ENCODE measurements at regions of chr20 and their contacts with region 1.

Region 1: DNA sequence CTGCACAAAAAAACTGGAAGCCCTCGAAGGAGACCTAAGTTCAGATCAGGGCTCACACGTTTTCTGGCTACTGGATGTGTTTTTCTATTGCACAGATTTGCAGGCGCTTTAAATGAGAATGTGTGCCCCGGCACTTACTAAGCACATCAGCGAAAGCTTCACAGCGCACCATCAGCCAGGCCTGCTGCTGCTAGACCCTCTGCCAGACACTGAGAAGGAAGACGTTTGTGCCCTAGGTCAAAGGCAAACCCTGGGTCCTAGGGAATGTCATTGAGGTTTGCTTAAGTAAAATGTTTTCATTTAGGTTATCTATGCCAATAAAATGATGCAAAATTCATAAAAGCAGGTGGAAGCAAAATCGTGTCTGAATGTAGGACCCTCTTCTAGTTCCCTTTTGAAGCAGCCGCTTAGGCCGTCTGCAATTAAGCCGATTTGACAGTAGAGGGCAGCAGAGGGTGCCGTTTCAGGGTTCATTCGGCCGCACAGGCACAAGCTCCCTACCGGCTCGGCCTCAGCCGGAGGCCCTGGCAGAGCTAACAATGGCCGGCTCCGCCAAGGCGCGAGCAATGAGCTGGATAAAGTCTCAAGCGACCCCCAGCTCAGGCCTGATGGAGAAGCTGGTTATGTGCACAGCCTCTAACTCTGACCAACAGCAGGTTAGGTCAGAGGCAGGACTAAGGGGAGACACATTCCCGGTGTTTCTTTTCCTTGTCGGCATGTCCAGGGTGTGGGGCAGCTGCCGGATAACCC is 107.2 kb upstream of the FOXA2 start:
- DNase-seq: peak; percentile 70 to 83 (median 81)
- H3K4me3 ChIP-seq: peak overlapping the region; percentile 7
- H3K27ac ChIP-seq: no peak overlapping the region
- H3K4me1 ChIP-seq: peaks cover 5% of the 10 kb centered on the region
- H3K27me3 ChIP-seq: no peaks in the 10 kb centered on the region
- CTCF ChIP-seq: peak; percentile 84 to 87 (median 85)
- EP300 ChIP-seq: no peak
- POLR2A ChIP-seq: no peak

Region 2: GRCh38 chr20:23235173-23236027 is 543.9 kb after region 1 on chr20:
- intact Hi-C with region 1: loop called (anchors 5 to 10 kb)
- DNase-seq: peak; percentile 76 to 83 (median 79)
- H3K4me3 ChIP-seq: no peak overlapping the region
- H3K27ac ChIP-seq: no peak overlapping the region
- H3K4me1 ChIP-seq: peaks cover 8% of the 10 kb centered on the region
- H3K27me3 ChIP-seq: no peaks in the 10 kb centered on the region
- CTCF ChIP-seq: peak; percentile 60 to 80 (median 71)
- EP300 ChIP-seq: no peak
- POLR2A ChIP-seq: no peak

Region 3: GRCh38 chr20:23245553-23246181 is 554.1 kb after region 1 on chr20:
- intact Hi-C with region 1: loop called in 1 of 4 experiments (anchors 10 kb)
- DNase-seq: peak in 2 of 5 donors; percentile 34 to 36
- H3K4me3 ChIP-seq: no peak overlapping the region
- H3K27ac ChIP-seq: no peak overlapping the region
- H3K4me1 ChIP-seq: peaks cover 2% of the 10 kb centered on the region
- H3K27me3 ChIP-seq: no peaks in the 10 kb centered on the region
- CTCF ChIP-seq: no peak
- EP300 ChIP-seq: no peak
- POLR2A ChIP-seq: no peak

Region 4: DNA sequence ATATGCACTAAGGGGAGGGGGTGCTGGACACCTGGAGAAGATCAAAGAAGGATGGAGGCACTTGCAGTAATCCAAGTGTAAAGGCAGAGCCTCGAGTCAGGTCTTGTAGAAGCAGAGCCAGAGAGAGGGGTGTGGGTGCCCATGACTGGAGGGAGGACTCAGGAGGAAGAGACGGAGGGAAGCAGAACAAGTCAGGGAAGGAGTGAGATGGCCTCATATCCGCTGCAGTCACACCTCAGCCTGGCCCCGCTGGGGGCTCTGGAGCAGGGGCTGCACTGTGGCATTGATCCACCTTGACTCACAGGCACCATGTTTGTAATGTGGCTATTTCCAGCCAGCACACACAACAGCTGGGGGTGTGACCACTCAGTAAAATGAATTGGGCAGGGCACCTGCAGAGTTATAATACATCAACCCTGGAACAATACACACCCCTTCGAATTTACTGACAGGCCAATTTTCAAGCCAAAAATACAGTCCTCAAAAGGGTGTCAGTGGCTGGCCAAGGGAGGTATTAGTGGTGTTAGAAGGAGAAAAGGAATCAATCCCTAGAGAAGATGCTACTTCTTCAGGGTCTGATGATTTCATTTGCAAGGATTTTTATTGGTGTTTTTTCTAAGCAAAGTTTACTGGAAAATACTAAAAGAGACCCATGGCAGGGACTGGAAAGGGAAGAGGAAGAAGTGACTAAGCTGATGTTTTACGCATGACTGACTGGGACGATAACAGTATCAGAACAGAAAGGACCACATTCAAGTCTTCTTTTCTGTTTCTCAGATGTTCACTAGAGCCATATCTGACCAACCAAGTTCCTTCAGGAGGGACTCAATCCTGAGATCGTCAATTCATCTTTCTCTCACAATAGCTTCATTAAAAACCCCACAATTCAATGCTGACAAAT is 640.2 kb after region 1 on chr20:
- intact Hi-C with region 1: loop called in 1 of 4 experiments (anchors 10 kb)
- DNase-seq: no peak
- H3K4me3 ChIP-seq: no peak overlapping the region
- H3K27ac ChIP-seq: no peak overlapping the region
- H3K4me1 ChIP-seq: no peaks in the 10 kb centered on the region
- H3K27me3 ChIP-seq: no peaks in the 10 kb centered on the region
- CTCF ChIP-seq: no peak
- EP300 ChIP-seq: no peak
- POLR2A ChIP-seq: no peak

Region 5: GRCh38 chr20:23340524-23340923 is 649.0 kb after region 1 on chr20:
- intact Hi-C with region 1: loop called (anchors 5 to 10 kb)
- DNase-seq: peak; percentile 45 to 68 (median 48)
- H3K4me3 ChIP-seq: no peak overlapping the region
- H3K27ac ChIP-seq: no peak overlapping the region
- H3K4me1 ChIP-seq: no peaks in the 10 kb centered on the region
- H3K27me3 ChIP-seq: no peaks in the 10 kb centered on the region
- CTCF ChIP-seq: peak; percentile 9 to 54 (median 52)
- EP300 ChIP-seq: no peak
- POLR2A ChIP-seq: no peak

Measured in ovary (tissue), 10 donors.